ENCODE measurements at regions of chr4 and their contacts with region 1.

Region 1: DNA sequence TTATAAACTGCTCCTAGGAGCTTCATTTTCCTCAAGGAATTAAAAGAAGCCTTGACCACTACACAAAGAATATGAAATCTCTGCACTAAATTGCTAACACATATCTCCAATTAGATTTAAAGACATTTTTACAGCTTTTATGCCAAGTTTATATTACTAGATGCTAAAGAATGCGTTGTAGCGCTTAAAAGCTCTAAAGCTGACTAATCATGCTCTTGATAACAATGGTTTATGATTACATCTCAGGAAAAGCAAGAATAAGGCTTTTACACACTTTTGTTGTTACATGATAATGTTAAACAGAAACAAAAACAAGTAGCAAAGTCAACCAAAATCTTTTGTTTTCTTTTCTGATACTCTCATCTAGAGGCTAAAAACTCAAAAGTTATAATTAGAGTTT is 44.7 kb downstream of the SLC10A7 start:
- DNase-seq: no peak
- H3K4me3 ChIP-seq: no peak overlapping the region
- H3K27ac ChIP-seq: no peak overlapping the region
- H3K4me1 ChIP-seq: no peaks in the 10 kb centered on the region
- H3K27me3 ChIP-seq: no peaks in the 10 kb centered on the region
- CTCF ChIP-seq: no peak
- EP300 ChIP-seq: no peak
- POLR2A ChIP-seq: no peak

Region 2: GRCh38 chr4:146333187-146333894 is 143.7 kb before region 1 on chr4:
- in situ Hi-C with region 1: no loop called
- intact Hi-C with region 1: no loop called
- DNase-seq: peak; percentile 10
- H3K4me3 ChIP-seq: no peak overlapping the region
- H3K27ac ChIP-seq: no peak overlapping the region
- H3K4me1 ChIP-seq: peaks cover 0 to 19% (median 2%) of the 10 kb centered on the region in 4 donors
- H3K27me3 ChIP-seq: no peaks in the 10 kb centered on the region
- CTCF ChIP-seq: no peak
- EP300 ChIP-seq: no peak
- POLR2A ChIP-seq: no peak

Region 3: GRCh38 chr4:146401274-146401673 is 75.8 kb before region 1 on chr4:
- in situ Hi-C with region 1: no loop called
- intact Hi-C with region 1: loop called (anchors 2 kb)
- DNase-seq: no peak
- H3K4me3 ChIP-seq: no peak overlapping the region
- H3K27ac ChIP-seq: no peak overlapping the region
- H3K4me1 ChIP-seq: no peaks in the 10 kb centered on the region
- H3K27me3 ChIP-seq: no peaks in the 10 kb centered on the region
- CTCF ChIP-seq: no peak
- EP300 ChIP-seq: no peak
- POLR2A ChIP-seq: no peak

Region 4: GRCh38 chr4:146510942-146511341 is 33.9 kb after region 1 on chr4:
- in situ Hi-C with region 1: no loop called
- intact Hi-C with region 1: no loop called
- DNase-seq: no peak
- H3K4me3 ChIP-seq: no peak overlapping the region
- H3K27ac ChIP-seq: no peak overlapping the region
- H3K4me1 ChIP-seq: no peaks in the 10 kb centered on the region
- H3K27me3 ChIP-seq: no peaks in the 10 kb centered on the region
- CTCF ChIP-seq: no peak
- EP300 ChIP-seq: no peak
- POLR2A ChIP-seq: no peak